Endothelial cell of umbilical vein (primary cell): ENCODE measurements at regions of chr6 and their contacts with region 1.

Region 1: GRCh38 chr6:36302227-36302976 is 32.5 kb downstream of the PNPLA1 start:
- DNase-seq: peak; percentile 92
- H3K4me3 ChIP-seq: no peak overlapping the region
- H3K27ac ChIP-seq: no peak overlapping the region
- H3K4me1 ChIP-seq: no peaks in the 10 kb centered on the region
- H3K27me3 ChIP-seq: peaks cover 0 to 6% of the 10 kb centered on the region in 2 experiments
- CTCF ChIP-seq: peak; percentile 95 to 98
- POLR2A ChIP-seq: no peak

Region 2: GRCh38 chr6:35663447-35664235 is 638.8 kb before region 1 on chr6:
- CTCF ChIA-PET with region 1: no interaction called
- POLR2A ChIA-PET with region 1: no interaction called
- dilution Hi-C with region 1: no loop called
- intact Hi-C with region 1: no loop called
- DNase-seq: peak; percentile 72
- H3K4me3 ChIP-seq: no peak overlapping the region
- H3K27ac ChIP-seq: peak overlapping the region; percentile 74
- H3K4me1 ChIP-seq: peaks cover 42% of the 10 kb centered on the region
- H3K27me3 ChIP-seq: no peaks in the 10 kb centered on the region
- CTCF ChIP-seq: no peak
- POLR2A ChIP-seq: no peak

Region 3: GRCh38 chr6:36075656-36076055 is 226.7 kb before region 1 on chr6:
- CTCF ChIA-PET with region 1: no interaction called
- POLR2A ChIA-PET with region 1: no interaction called
- dilution Hi-C with region 1: no loop called
- intact Hi-C with region 1: no loop called
- DNase-seq: no peak
- H3K4me3 ChIP-seq: no peak overlapping the region
- H3K27ac ChIP-seq: no peak overlapping the region
- H3K4me1 ChIP-seq: no peaks in the 10 kb centered on the region
- H3K27me3 ChIP-seq: no peaks in the 10 kb centered on the region
- CTCF ChIP-seq: no peak
- POLR2A ChIP-seq: no peak

Region 4: DNA sequence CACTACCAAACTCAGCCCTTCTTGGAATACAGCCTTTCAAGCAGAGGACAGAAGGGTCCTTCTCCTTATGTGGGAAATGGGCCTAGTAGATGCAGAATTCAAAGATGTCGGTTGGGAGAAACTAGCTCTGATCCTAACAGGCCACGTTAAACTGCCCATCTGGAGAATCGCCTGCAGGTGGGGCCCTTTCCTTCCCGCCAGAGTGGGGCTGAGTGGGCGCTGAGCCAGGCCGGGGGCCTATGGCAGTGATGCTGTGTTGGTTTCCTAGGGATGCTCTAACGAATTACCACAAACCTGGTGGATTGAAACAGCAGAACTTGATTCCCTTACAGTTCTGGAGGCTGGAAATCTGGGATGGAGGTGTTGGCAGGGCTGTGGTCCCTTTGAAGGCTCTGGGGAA is 163.0 kb before region 1 on chr6:
- CTCF ChIA-PET with region 1: interaction called, 11 read pairs
- POLR2A ChIA-PET with region 1: no interaction called
- dilution Hi-C with region 1: no loop called
- intact Hi-C with region 1: no loop called
- DNase-seq: no peak
- H3K4me3 ChIP-seq: no peak overlapping the region
- H3K27ac ChIP-seq: no peak overlapping the region
- H3K4me1 ChIP-seq: no peaks in the 10 kb centered on the region
- H3K27me3 ChIP-seq: no peaks in the 10 kb centered on the region
- CTCF ChIP-seq: peak; percentile 40 to 43
- POLR2A ChIP-seq: no peak

Region 5: DNA sequence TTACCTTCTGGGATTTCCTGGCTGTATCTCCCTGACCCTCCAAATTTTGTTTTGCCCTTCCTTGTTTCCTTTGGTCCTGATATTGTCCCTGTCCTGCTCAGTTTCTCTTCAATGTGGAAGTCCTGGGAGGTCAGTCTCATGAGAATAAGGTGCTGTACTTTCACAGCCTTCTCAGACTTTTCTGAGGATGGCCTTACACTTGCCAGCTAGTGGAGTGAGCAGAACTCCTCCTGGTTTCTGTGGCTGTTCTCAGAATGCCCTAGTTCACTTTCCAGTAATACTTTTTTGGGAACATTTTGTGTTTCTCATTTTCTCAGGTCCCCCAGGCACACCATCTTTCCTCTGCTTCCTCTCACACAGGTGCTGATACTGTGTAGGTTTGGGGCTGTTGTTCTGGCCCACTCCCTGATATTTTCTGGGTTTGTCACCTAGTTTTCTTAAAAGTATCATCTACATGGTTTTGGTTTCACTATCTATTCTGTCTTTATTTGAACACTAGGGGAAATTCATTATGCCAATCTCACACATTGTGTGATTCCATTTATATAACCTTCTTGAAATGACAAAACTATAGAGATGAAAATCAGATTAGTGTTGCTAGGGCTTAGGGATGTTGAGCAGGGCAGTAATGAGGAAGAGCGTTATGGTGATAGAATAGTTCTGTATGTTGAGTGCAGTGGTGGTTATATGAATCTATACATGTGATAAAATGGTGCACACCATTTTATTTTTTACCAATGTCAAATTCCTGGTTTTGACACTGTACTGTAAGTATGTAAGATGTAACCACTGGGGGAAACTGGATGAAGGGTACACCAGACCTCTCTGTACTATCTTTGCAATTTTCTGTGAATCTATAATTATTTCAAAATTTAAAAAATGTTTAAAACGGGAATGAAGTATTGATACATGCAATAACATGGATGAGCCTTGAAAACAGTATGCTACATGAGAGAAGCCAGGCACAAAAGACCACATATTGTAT is 133.1 kb before region 1 on chr6:
- CTCF ChIA-PET with region 1: no interaction called
- POLR2A ChIA-PET with region 1: no interaction called
- dilution Hi-C with region 1: no loop called
- intact Hi-C with region 1: no loop called
- DNase-seq: no peak
- H3K4me3 ChIP-seq: no peak overlapping the region
- H3K27ac ChIP-seq: no peak overlapping the region
- H3K4me1 ChIP-seq: no peaks in the 10 kb centered on the region
- H3K27me3 ChIP-seq: peaks cover 0 to 8% of the 10 kb centered on the region in 2 experiments
- CTCF ChIP-seq: no peak
- POLR2A ChIP-seq: no peak

Region 6: GRCh38 chr6:36252005-36252404 is 50.4 kb before region 1 on chr6:
- CTCF ChIA-PET with region 1: interaction called, 25 read pairs
- POLR2A ChIA-PET with region 1: no interaction called
- dilution Hi-C with region 1: no loop called
- intact Hi-C with region 1: no loop called
- DNase-seq: no peak
- H3K4me3 ChIP-seq: no peak overlapping the region
- H3K27ac ChIP-seq: no peak overlapping the region
- H3K4me1 ChIP-seq: peaks cover 25% of the 10 kb centered on the region
- H3K27me3 ChIP-seq: no peaks in the 10 kb centered on the region
- CTCF ChIP-seq: no peak
- POLR2A ChIP-seq: no peak

Region 7: DNA sequence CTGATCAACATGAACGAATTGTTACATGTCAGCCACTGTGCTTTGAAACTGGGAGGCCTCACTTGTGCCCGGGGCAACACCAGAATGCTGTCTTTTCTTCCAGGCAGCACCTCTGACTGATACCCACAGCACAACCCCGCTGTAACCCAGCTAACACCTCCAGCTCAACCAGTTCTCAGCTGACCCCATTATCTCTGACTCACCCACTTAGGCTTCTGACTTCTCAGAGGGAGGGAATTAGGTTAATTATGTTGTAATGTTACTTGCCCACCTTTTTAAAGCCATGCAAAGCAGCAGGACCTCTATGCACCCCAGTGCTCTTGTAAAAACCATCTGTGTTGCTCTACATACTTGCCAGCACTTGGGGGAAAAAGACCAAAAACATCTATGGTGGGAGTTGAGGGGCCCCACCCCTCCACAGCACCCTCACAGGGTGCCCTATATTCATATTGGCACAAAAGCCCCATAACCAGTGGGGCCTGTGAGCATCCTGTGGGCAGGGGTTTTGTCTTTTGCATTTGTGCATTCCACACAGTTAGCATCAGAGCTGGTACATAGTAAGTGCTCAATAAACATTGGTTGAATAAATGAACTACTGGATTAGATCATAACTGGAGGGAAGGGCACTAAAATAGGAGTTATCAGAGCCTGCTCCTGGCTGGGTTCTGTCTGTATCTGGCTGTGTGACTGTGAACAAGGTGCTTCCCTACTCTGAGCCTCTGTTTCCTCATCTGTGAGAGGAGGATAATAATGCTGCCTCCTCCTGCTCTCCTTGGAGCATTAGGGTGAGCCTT is 12.0 kb after region 1 on chr6:
- CTCF ChIA-PET with region 1: interaction called, 27 read pairs
- POLR2A ChIA-PET with region 1: no interaction called
- dilution Hi-C with region 1: no loop called
- intact Hi-C with region 1: no loop called
- DNase-seq: no peak
- H3K4me3 ChIP-seq: no peak overlapping the region
- H3K27ac ChIP-seq: no peak overlapping the region
- H3K4me1 ChIP-seq: no peaks in the 10 kb centered on the region
- H3K27me3 ChIP-seq: peaks cover 20 to 26% of the 10 kb centered on the region in 2 experiments
- CTCF ChIP-seq: no peak
- POLR2A ChIP-seq: no peak

Region 8: DNA sequence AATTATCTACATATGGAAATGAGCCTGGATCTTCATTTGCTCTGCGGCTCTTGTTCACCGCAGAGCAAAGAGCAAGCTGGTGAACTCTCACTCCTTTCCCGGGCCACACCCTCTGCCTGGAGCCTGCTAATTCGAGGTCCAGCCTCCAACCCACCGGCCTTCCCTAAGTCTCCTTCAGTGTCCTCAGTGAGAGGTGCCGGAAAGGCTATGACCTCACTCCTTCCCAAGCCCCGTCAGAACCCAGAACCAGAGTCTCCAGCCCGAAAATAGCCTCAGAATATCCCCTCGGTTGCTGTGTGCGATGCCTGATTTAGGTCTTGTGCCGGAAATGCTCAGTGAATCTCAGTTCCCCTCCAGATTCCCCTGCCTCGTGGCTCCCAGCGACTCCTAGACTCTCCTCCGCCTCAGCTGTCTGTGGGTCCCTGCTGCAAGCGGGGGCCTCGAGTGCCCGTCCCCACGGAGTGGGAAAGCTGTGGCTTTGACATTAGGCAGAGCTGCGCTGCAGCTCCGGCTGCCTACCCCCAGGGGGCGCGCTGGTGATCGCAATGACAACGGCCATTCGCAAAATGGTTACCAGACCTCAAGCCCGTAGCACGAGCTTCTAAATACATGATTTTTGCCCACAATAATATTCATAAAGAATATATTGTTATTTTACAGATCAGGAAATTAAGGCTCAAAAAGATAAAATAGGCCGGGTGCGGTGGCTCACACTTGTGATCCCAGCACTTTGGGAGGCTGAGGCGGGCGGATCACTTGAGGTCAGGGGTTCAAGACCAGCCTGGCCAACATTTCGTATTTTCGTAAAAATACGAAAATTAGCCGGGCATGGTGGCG is 38.4 kb after region 1 on chr6:
- CTCF ChIA-PET with region 1: interaction called, 32 read pairs
- POLR2A ChIA-PET with region 1: no interaction called
- dilution Hi-C with region 1: no loop called
- intact Hi-C with region 1: loop called (anchors 1 kb)
- DNase-seq: peak; percentile 59
- H3K4me3 ChIP-seq: no peak overlapping the region
- H3K27ac ChIP-seq: no peak overlapping the region
- H3K4me1 ChIP-seq: peaks cover 4% of the 10 kb centered on the region
- H3K27me3 ChIP-seq: peaks cover 36 to 43% of the 10 kb centered on the region in 2 experiments
- CTCF ChIP-seq: peak; percentile 98 to 99
- POLR2A ChIP-seq: no peak

Region 9: DNA sequence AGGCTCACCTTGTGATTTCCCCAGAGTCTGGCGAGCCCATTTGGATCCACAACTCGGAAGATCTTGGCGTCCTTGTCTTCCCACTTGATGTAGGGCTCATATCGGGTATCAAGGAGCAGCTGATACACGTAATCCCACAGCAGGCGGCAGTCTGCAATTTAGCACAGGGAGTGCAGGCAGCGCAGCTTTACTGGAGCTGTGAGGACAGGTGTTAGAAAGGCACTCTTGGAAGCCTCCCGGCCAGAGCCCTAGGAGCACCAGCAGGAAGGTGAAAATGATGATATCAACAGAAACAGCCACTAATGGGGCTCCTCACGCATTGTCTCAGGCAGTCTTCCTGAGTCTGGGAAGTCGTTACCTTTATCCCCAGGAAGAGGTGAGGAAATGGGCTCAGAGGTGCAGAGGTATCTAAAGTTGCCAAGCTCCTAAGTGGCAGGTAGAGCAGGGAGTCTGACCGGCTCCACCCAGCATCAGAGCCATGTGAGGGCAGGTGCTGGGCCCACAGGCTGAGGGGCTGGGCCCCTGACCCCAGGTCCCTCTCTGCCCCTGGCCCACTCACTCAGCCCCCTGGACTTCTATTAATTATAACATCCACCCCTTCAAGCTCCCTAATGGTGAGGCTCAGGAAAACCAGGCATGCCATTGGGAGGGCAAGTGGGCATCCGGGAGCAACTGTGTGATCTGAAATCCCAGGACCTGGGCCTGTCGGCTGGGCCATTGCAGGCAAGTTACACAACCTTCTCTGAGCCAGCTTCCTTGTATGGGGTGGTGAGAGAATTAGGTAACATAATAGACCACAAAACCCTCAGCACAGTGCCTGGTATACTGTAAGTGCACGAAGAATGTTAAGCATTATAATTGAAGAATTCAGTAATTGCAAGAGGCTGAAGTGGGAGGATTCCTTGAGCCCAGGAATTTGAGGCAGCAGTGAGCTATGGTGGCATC is 66.8 kb after region 1 on chr6:
- CTCF ChIA-PET with region 1: interaction called, 168 read pairs
- POLR2A ChIA-PET with region 1: no interaction called
- dilution Hi-C with region 1: no loop called
- intact Hi-C with region 1: no loop called
- DNase-seq: no peak
- H3K4me3 ChIP-seq: no peak overlapping the region
- H3K27ac ChIP-seq: no peak overlapping the region
- H3K4me1 ChIP-seq: peaks cover 9% of the 10 kb centered on the region
- H3K27me3 ChIP-seq: peaks cover 4 to 10% of the 10 kb centered on the region in 2 experiments
- CTCF ChIP-seq: no peak
- POLR2A ChIP-seq: no peak

Region 10: DNA sequence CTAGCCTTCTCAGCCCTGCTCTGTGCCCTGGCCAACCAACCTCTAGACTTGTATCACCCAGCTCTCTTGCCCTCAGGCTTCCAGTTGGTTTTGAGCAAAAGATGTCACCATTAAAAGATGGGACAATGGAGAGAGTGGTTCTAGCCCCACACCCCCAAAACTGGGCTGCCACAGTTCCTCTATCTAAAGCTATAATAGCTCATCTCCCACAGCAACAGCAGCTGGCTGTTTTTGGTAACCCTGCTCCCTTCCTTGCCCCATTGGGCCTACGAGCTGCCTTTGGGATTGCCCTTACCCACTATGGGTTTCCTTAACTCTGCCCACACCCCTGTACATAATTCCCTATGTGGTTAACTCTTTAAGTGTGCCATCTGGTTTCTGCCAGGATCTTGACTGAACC is 284.2 kb after region 1 on chr6:
- CTCF ChIA-PET with region 1: no interaction called
- POLR2A ChIA-PET with region 1: no interaction called
- dilution Hi-C with region 1: no loop called
- intact Hi-C with region 1: no loop called
- DNase-seq: no peak
- H3K4me3 ChIP-seq: no peak overlapping the region
- H3K27ac ChIP-seq: no peak overlapping the region
- H3K4me1 ChIP-seq: no peaks in the 10 kb centered on the region
- H3K27me3 ChIP-seq: no peaks in the 10 kb centered on the region
- CTCF ChIP-seq: no peak
- POLR2A ChIP-seq: no peak